ENCODE measurements at regions of chr11 and their contacts with region 1.

Region 1: DNA sequence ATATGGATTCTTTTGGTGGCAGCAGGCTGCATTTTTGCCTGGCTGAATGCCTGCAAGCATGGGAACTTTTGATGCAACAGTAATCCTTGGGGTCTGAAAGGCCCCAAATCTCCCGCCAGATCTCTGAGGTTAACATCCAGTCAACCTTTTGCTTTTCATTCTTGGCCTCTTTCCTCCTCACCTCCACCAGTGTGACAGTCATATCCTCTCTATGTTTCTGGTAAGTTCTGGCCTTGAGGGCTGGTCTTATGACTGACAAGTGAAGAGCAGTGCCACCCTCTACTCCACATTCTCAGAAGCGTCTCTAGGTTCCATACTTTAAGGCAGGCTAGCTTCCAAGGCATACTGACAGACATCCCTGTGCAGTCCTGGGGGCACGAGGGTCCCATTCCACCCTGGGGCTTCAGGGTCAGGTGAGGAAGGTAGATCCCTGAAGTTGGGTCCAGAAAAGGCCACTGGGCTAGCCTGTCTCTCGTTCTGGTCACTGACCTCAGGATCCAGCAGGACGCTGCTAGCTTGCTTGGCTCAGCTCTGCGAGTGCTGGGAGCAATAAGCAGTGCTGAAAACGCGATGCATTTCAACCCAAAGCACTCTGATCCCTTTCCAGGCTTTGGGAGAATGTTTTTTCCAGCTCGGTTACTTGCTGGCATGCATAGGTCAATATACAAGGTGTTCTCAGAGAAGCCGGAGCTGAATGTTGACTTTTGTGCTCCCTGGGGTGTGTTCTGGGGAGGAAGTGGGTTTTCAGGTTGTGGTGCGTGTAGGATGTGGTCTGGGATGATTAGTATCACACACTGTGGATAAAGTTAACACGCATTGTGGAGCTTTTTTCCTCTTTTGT is 75.2 kb downstream of the PTPRJ start:
- DNase-seq: peak; percentile 77 to 84 (median 81)
- H3K4me3 ChIP-seq: peak overlapping the region; percentile 33 to 40
- H3K4me3 Mint-ChIP-seq: peak overlapping the region; percentile 71 to 88 (median 83)
- H3K27ac ChIP-seq: peak overlapping the region; percentile 31
- H3K27ac Mint-ChIP-seq: peak overlapping the region; percentile 79 to 96 (median 91)
- H3K4me1 ChIP-seq: peaks cover 89% of the 10 kb centered on the region
- H3K4me1 Mint-ChIP-seq: peaks cover 60 to 93% (median 75%) of the 10 kb centered on the region in 4 donors
- H3K27me3 ChIP-seq: no peaks in the 10 kb centered on the region
- H3K27me3 Mint-ChIP-seq: no peaks in the 10 kb centered on the region

Region 2: DNA sequence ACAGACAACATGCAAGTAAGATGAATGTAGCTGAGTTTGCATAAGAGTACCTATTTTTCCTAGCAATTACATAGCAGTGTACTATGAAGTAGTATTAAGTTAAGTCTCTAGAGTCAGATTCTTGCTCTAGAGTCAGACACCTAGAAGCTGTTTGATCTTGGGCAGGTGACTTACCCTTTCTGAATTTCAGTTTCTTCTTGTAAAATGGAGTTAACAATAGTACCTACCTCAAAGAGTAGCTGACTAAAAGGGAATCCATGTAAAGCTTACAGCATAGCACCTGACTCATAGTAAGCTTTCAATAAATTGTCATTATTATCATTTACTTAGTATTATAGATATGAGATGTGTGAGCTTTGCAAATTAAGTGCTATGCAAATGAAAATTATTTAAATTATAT is 123.0 kb before region 1 on chr11:
- CTCF ChIA-PET with region 1: interaction called, 18 read pairs
- POLR2A ChIA-PET with region 1: interaction called, 13 read pairs
- intact Hi-C with region 1: loop called (anchors 1 kb)
- DNase-seq: no peak
- H3K4me3 ChIP-seq: no peak overlapping the region
- H3K4me3 Mint-ChIP-seq: no peak overlapping the region
- H3K27ac ChIP-seq: no peak overlapping the region
- H3K27ac Mint-ChIP-seq: no peak overlapping the region
- H3K4me1 ChIP-seq: peaks cover 10% of the 10 kb centered on the region
- H3K4me1 Mint-ChIP-seq: peaks cover 8 to 20% (median 15%) of the 10 kb centered on the region in 4 donors
- H3K27me3 ChIP-seq: no peaks in the 10 kb centered on the region
- H3K27me3 Mint-ChIP-seq: no peaks in the 10 kb centered on the region

Region 3: GRCh38 chr11:48001438-48002021 is 54.0 kb before region 1 on chr11:
- CTCF ChIA-PET with region 1: interaction called, 11 read pairs
- POLR2A ChIA-PET with region 1: interaction called, 184 read pairs
- intact Hi-C with region 1: loop called (anchors 1 kb)
- DNase-seq: peak; percentile 90 to 97 (median 95)
- H3K4me3 ChIP-seq: peak overlapping the region in 1 of 2 donors; percentile 14
- H3K4me3 Mint-ChIP-seq: peak overlapping the region; percentile 66 to 93 (median 76)
- H3K27ac ChIP-seq: peak overlapping the region; percentile 65
- H3K27ac Mint-ChIP-seq: peak overlapping the region; percentile 90 to 99 (median 97)
- H3K4me1 ChIP-seq: peaks cover 95% of the 10 kb centered on the region
- H3K4me1 Mint-ChIP-seq: peaks cover 61 to 93% (median 80%) of the 10 kb centered on the region in 4 donors
- H3K27me3 ChIP-seq: no peaks in the 10 kb centered on the region
- H3K27me3 Mint-ChIP-seq: no peaks in the 10 kb centered on the region

Region 4: DNA sequence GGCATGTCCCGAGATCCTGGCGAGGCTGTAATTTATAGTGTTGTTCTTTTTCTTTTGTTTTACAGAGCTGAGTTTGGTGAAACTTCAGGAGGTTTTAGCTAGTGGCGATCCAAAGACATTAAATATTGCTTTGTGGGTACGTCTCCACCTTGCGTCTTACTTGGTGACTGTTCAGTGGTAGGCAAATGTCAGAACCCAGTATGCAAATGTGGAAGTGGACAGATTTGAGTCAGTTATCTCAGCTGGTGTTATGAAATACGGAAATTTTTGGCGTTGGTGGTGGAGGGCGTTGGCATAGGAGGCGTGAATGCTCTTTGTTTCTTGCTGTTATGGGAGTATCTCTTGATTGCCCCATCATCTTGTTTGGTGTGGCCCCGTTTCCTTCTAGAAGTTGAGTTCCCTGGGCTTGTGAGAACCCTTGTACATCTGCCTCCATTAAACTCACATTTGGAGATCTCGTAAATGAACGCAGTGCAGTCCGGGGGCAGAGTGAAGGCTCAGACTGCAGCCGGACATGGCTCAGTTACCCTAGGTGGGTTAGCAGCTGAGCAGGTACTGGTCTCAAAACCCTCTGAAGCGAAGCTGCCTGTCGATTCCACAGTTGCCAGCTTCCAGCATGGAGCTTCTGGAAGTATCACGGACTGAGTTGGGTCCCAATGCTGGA is 35.3 kb before region 1 on chr11:
- CTCF ChIA-PET with region 1: interaction called, 15 read pairs
- POLR2A ChIA-PET with region 1: interaction called, 70 read pairs
- intact Hi-C with region 1: loop called (anchors 1 kb)
- DNase-seq: peak; percentile 58 to 74 (median 59)
- H3K4me3 ChIP-seq: peak overlapping the region in 1 of 2 donors; percentile 17
- H3K4me3 Mint-ChIP-seq: peak overlapping the region; percentile 21 to 85 (median 70)
- H3K27ac ChIP-seq: peak overlapping the region; percentile 59
- H3K27ac Mint-ChIP-seq: peak overlapping the region; percentile 75 to 93 (median 84)
- H3K4me1 ChIP-seq: peaks cover 62% of the 10 kb centered on the region
- H3K4me1 Mint-ChIP-seq: peaks cover 54 to 77% (median 65%) of the 10 kb centered on the region in 4 donors
- H3K27me3 ChIP-seq: no peaks in the 10 kb centered on the region
- H3K27me3 Mint-ChIP-seq: no peaks in the 10 kb centered on the region

Region 5: GRCh38 chr11:48034926-48035871 is 20.3 kb before region 1 on chr11:
- CTCF ChIA-PET with region 1: interaction called, 3 read pairs
- POLR2A ChIA-PET with region 1: interaction called, 22 read pairs
- intact Hi-C with region 1: no loop called
- DNase-seq: no peak
- H3K4me3 ChIP-seq: no peak overlapping the region
- H3K4me3 Mint-ChIP-seq: peak overlapping the region in 6 of 8 donors; percentile 11 to 64 (median 42)
- H3K27ac ChIP-seq: no peak overlapping the region
- H3K27ac Mint-ChIP-seq: peak overlapping the region in 4 of 7 donors; percentile 11 to 55 (median 42)
- H3K4me1 ChIP-seq: peaks cover 53% of the 10 kb centered on the region
- H3K4me1 Mint-ChIP-seq: peaks cover 42 to 75% (median 61%) of the 10 kb centered on the region in 4 donors
- H3K27me3 ChIP-seq: no peaks in the 10 kb centered on the region
- H3K27me3 Mint-ChIP-seq: no peaks in the 10 kb centered on the region

Measured in CD4-positive, alpha-beta memory T cell (primary cell).